ENCODE measurements at regions of chr5 and their contacts with region 1.

Region 1: GRCh38 chr5:132915681-132916080 is 42.2 kb downstream of the LEAP2 start:
- DNase-seq: no peak
- ATAC-seq: no peak
- H3K4me3 ChIP-seq: no peak overlapping the region
- H3K4me3 Mint-ChIP-seq: no peak overlapping the region
- H3K27ac ChIP-seq: no peak overlapping the region
- H3K27ac Mint-ChIP-seq: no peak overlapping the region
- H3K4me1 ChIP-seq: no peaks in the 10 kb centered on the region
- H3K4me1 Mint-ChIP-seq: peaks cover 9 to 13% (median 9%) of the 10 kb centered on the region in 3 donors
- H3K27me3 ChIP-seq: no peaks in the 10 kb centered on the region
- H3K27me3 Mint-ChIP-seq: no peaks in the 10 kb centered on the region

Region 2: DNA sequence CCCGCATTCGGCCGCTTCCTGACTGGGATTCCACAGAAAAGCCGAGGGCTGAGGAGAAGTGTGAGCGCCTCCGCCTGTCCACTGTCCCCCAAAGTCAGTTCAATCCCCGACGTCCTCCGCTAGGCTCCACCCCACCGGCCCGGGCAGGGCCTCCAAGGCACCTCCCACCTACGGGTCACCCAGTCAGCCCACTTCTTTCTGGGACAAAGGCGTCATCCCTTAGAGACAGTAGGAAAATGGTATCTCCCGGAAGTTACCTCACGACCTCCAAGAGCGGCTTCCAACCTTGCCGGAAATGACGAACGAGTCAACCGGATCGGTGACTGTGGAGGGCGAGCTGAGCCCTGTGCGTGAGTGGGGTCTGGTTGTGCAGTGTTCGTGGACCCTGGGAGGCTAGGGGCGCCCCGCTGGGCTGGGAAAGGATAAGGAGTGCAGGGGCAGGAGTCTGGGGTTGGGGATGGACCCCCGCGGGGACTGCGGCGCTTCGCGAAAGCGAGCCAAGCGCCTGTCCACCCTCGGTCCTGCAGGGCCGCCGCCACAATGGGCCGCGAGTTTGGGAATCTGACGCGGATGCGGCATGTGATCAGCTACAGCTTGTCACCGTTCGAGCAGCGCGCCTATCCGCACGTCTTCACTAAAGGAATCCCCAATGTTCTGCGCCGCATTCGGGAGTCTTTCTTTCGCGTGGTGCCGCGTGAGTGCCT is 49.2 kb before region 1 on chr5 and contains the starts of genes GDF9 and UQCRQ:
- CTCF ChIA-PET with region 1: no interaction called
- POLR2A ChIA-PET with region 1: interaction called in 1 of 2 experiments, 11 read pairs
- DNase-seq: peak; percentile 71 to 99 (median 89)
- ATAC-seq: peak; percentile 95 to 98 (median 96)
- H3K4me3 ChIP-seq: peak within 1 kb of the TSS; percentile 81 to 90
- H3K4me3 Mint-ChIP-seq: peak within 1 kb of the TSS; percentile 98 to 100 (median 99)
- H3K27ac ChIP-seq: peak within 1 kb of the TSS; percentile 98
- H3K27ac Mint-ChIP-seq: peak within 1 kb of the TSS; percentile 97 to 99
- H3K4me1 ChIP-seq: peaks cover 2 to 21% of the 10 kb centered on the region in 2 experiments
- H3K4me1 Mint-ChIP-seq: peaks cover 27 to 30% (median 27%) of the 10 kb centered on the region in 3 donors
- H3K27me3 ChIP-seq: no peaks in the 10 kb centered on the region
- H3K27me3 Mint-ChIP-seq: no peaks in the 10 kb centered on the region
- total RNA-seq, gene GDF9: 0.63 to 1.9 (median 0.92) TPM
- total RNA-seq, gene UQCRQ: 119 to 139 (median 132) TPM